Gastrocnemius medialis (tissue), 4 donors: ENCODE measurements at regions of chr2 and their contacts with region 1.

Region 1: DNA sequence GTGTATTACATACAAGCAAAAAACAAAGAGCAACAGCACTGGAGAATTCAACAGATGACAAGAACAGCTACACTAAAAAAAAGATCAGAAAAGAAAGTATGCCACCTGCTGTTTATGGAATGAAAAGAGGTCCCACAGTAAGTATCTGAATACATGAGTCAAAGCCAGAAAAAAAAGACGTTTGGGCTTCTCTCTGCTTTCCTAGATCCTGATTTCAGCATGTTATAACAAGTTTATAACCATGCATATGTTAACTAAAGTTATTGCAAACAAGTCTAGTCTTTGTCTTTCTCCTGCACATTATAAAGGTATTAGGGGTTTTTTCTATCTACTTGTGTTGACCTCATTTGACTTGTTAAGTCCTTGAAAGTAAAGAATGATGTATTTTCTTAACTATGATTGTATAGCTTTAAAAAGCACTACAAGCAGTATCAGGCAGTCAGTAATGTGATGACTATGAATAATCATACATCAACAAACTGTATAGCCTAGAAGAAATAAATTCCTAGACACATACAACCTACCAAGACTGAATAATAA is 108.5 kb upstream of the COL5A2 start:
- DNase-seq: no peak
- ATAC-seq: peak in 1 of 2 donors; percentile 66
- H3K4me3 ChIP-seq: no peak overlapping the region
- H3K27ac ChIP-seq: no peak overlapping the region
- H3K4me1 ChIP-seq: no peaks in the 10 kb centered on the region
- H3K27me3 ChIP-seq: no peaks in the 10 kb centered on the region
- CTCF ChIP-seq: peak in 4 of 5 experiments; percentile 37 to 57 (median 40)
- POLR2A ChIP-seq: no peak

Region 2: DNA sequence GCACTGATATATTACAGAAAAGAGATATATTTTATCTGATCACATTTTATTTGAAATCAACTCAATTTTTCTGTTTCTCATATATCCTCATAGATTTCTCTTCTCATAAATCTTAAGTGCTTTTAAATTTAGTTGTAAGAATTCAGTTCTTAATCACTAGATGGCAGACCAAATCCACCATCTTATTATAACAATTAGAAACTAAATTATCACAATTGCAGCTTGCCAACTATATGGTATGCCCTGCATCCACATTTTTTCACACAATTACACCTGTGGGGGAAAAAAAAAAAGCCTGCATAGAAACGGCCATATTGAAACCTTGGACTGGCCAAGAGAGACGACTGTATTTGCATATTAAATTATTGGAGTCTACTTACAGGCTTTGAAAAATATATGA is 172.9 kb before region 1 on chr2:
- in situ Hi-C with region 1: loop called in 1 of 4 experiments (anchors 25 kb)
- intact Hi-C with region 1: no loop called
- DNase-seq: no peak
- ATAC-seq: no peak
- H3K4me3 ChIP-seq: peak overlapping the region in 1 of 4 donors; percentile 30
- H3K27ac ChIP-seq: no peak overlapping the region
- H3K4me1 ChIP-seq: no peaks in the 10 kb centered on the region
- H3K27me3 ChIP-seq: no peaks in the 10 kb centered on the region
- CTCF ChIP-seq: peak in 1 of 5 experiments; percentile 16
- POLR2A ChIP-seq: no peak

Region 3: DNA sequence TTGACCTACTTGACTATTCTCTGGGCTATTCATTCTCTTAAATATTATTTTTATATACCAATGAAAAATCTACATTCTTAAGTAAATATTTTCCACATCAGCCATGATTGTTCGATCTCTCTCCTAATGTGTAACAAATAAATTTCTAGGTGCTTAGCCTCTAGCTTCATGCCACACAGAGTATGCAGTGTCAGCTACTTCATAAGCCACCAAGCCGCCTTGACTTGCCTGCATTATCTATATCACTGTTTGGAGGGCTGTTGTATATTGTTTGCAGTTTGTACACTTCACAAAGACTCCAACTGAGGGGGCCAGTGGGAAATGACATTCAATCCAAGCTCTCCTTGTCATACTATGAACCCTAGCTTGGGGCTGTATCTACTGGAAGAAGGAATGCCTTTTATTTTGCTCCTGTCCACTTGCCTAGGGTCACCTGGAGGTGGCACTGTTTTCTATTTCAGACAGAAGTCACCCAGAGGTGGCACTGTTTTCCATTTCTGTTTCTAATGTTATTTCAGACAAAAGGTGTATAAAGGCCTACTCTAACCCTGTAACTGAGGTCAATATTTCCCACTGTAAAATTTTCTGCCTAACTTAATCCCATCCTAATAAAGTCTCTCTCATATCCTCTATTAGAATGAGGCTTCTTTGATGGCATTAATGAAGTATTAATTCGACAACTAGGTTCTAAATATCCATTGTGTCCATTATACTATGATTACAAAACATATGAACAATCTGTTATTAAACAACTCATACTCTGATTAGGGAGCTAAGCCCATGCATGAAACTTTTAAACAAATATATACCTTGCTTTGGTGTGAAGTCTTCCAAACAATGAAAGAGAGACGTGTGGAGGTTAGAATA is 144.9 kb before region 1 on chr2:
- in situ Hi-C with region 1: no loop called
- intact Hi-C with region 1: loop called (anchors 1 kb)
- DNase-seq: no peak
- ATAC-seq: peak in 1 of 2 donors; percentile 51
- H3K4me3 ChIP-seq: no peak overlapping the region
- H3K27ac ChIP-seq: no peak overlapping the region
- H3K4me1 ChIP-seq: no peaks in the 10 kb centered on the region
- H3K27me3 ChIP-seq: no peaks in the 10 kb centered on the region
- CTCF ChIP-seq: peak; percentile 29 to 60 (median 40)
- POLR2A ChIP-seq: no peak

Region 4: GRCh38 chr2:189210250-189211075 is 77.6 kb before region 1 on chr2:
- in situ Hi-C with region 1: no loop called
- intact Hi-C with region 1: no loop called
- DNase-seq: peak in 1 of 2 donors; percentile 15
- ATAC-seq: peak; percentile 61 to 68
- H3K4me3 ChIP-seq: peak overlapping the region; percentile 18 to 45 (median 23)
- H3K27ac ChIP-seq: peak overlapping the region; percentile 53 to 71 (median 64)
- H3K4me1 ChIP-seq: peaks cover 3 to 4% of the 10 kb centered on the region in 2 donors
- H3K27me3 ChIP-seq: no peaks in the 10 kb centered on the region
- CTCF ChIP-seq: no peak
- POLR2A ChIP-seq: no peak

Region 5: GRCh38 chr2:189267925-189268579 is 20.0 kb before region 1 on chr2:
- in situ Hi-C with region 1: no loop called
- intact Hi-C with region 1: no loop called
- DNase-seq: no peak
- ATAC-seq: no peak
- H3K4me3 ChIP-seq: no peak overlapping the region
- H3K27ac ChIP-seq: no peak overlapping the region
- H3K4me1 ChIP-seq: no peaks in the 10 kb centered on the region
- H3K27me3 ChIP-seq: no peaks in the 10 kb centered on the region
- CTCF ChIP-seq: no peak
- POLR2A ChIP-seq: no peak

Region 6: DNA sequence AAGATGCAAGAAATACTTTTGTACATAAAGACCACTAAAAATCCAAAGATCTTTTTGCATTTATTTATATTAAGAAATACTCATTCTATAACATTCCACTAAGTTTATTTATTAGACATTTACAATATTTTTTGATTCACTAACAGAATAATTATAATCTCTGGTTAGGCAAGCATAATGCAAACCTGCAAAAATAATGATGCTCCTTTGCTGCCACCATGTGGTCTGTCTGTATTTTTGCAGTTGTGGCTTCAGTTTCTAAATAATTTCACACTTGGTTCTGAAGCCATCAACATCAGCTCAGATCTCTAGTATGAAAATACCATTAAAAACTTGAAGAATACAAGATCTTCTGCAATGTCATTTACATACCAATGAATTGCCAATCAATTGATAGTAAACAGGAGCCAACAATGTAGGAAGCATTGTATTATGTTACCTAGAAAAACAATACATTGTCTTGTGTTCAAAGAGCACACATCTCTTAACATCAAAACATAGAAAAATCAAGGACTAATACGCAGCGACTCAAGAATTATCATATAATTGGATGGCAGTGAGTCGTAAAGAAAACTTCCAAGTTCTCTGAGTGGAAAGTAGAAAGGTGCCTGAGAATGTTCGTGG is 124.4 kb after region 1 on chr2:
- in situ Hi-C with region 1: no loop called
- intact Hi-C with region 1: loop called (anchors 5 kb)
- DNase-seq: no peak
- ATAC-seq: peak; percentile 60 to 82
- H3K4me3 ChIP-seq: no peak overlapping the region
- H3K27ac ChIP-seq: peak overlapping the region in 3 of 4 donors; percentile 42 to 51 (median 45)
- H3K4me1 ChIP-seq: peaks cover 7 to 12% of the 10 kb centered on the region in 2 donors
- H3K27me3 ChIP-seq: no peaks in the 10 kb centered on the region
- CTCF ChIP-seq: peak; percentile 46 to 87 (median 70)
- POLR2A ChIP-seq: no peak